AG04450 (cell line): ENCODE measurements at regions of chr1 and their contacts with region 1.

Region 1: DNA sequence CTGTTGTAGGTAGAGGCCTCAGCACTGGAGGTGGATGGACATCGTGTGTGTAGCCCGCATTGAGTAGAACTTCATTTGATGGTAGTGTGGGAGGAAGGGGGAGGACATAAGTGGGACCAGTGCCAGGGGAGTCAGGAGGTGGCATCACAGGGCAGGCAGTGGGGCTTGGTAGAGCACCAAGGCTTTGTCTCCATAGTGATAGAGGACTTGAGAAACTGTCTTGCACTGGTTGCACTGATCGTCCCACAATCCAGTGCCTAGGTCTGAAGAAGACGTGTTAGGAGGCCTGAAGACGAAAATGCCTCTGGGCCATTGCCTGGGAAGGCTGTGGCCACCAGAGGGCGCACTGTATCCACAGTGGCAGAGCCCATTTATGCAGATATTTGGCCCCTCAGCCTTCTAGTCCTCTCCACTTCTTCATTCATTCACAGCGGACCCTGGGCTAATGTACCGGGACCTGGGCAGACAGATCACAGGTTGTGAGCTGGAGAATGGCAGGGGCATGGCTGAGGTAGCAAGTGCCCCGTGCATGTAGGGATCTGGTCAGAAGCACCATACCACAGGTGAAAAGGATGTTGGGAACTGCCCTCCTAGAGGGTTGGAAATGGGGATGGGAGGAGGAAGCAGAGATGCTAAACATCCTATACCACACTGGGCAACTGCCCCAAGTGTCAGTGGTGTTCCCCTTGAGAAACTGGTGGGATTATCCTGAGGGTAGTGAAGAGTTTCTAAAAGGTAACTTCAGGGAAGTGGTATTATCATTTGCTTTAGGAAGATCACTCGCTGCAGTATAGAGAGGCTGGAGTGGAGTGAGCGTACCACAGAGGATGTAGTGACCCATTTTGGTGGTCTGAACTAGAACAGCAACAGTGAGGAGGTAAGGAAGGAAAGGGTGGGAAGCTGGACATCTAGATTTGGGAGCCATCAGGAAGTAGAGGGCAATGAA is 95.3 kb downstream of the PIK3R3 start:
- DNase-seq: peak; percentile 59
- H3K4me3 ChIP-seq: no peak overlapping the region
- H3K27ac ChIP-seq: no peak overlapping the region
- H3K27me3 ChIP-seq: no peaks in the 10 kb centered on the region
- CTCF ChIP-seq: peak; percentile 99

Region 2: DNA sequence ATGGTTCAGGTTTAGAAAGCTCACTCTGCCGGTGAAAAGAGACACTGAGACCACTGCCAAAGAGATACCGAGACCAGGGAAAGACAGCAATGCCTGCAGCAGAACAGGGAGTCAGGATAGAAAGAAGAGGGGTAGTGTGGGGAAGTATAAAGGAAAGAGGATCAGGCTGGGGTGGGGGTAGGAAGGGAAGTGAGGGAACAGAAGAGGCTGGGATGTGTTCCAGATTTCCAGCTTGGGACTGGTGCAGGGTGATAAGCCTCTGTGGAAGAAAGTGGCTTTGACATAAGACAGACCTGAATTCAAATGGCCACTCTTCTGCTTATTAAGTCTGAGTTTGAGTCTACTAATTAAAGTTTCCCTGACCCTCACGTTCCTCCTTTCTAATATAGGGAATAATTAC is 10.6 kb before region 1 on chr1:
- CTCF ChIA-PET with region 1: interaction called, 14 read pairs
- POLR2A ChIA-PET with region 1: no interaction called
- DNase-seq: no peak
- H3K4me3 ChIP-seq: no peak overlapping the region
- H3K27ac ChIP-seq: no peak overlapping the region
- H3K27me3 ChIP-seq: no peaks in the 10 kb centered on the region
- CTCF ChIP-seq: no peak

Region 3: DNA sequence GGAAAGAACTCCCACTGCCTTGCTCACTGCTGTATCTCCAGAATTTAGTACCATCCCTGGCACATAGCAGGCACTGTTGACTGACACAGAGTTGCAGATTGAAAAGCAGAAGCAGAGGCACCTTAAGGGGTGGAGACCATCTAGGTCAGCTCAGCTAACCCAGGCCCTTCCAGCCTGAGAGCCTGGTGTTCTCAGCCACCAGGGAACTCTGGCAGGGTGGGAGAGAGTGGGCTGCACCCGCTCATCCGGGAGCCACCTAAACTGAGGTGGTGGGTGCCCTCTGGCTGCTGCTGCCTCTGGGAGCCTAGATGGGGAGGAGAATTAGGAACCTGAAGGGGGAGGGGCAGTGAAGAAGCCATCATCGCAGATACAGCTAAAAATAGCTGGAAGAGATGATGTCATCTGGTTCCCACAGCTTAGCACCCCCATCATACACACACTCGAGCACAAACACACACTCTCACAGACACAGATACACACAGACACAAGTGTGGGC is 136.2 kb after region 1 on chr1:
- CTCF ChIA-PET with region 1: interaction called, 188 read pairs
- POLR2A ChIA-PET with region 1: no interaction called
- DNase-seq: no peak
- H3K4me3 ChIP-seq: no peak overlapping the region
- H3K27ac ChIP-seq: no peak overlapping the region
- H3K27me3 ChIP-seq: peaks cover 14% of the 10 kb centered on the region
- CTCF ChIP-seq: no peak

Region 4: GRCh38 chr1:46179138-46180081 is 142.2 kb after region 1 on chr1:
- CTCF ChIA-PET with region 1: interaction called, 188 read pairs
- POLR2A ChIA-PET with region 1: no interaction called
- DNase-seq: peak; percentile 73
- H3K4me3 ChIP-seq: no peak overlapping the region
- H3K27ac ChIP-seq: no peak overlapping the region
- H3K27me3 ChIP-seq: no peaks in the 10 kb centered on the region
- CTCF ChIP-seq: peak; percentile 97